ENCODE measurements at regions of chr3 and their contacts with region 1.

Region 1: GRCh38 chr3:36729204-36730056 is 34.9 kb downstream of the DCLK3 start:
- DNase-seq: no peak
- H3K4me3 Mint-ChIP-seq: no peak overlapping the region
- H3K27ac Mint-ChIP-seq: no peak overlapping the region
- H3K4me1 Mint-ChIP-seq: no peaks in the 10 kb centered on the region
- H3K27me3 Mint-ChIP-seq: peaks cover 10% of the 10 kb centered on the region

Region 2: DNA sequence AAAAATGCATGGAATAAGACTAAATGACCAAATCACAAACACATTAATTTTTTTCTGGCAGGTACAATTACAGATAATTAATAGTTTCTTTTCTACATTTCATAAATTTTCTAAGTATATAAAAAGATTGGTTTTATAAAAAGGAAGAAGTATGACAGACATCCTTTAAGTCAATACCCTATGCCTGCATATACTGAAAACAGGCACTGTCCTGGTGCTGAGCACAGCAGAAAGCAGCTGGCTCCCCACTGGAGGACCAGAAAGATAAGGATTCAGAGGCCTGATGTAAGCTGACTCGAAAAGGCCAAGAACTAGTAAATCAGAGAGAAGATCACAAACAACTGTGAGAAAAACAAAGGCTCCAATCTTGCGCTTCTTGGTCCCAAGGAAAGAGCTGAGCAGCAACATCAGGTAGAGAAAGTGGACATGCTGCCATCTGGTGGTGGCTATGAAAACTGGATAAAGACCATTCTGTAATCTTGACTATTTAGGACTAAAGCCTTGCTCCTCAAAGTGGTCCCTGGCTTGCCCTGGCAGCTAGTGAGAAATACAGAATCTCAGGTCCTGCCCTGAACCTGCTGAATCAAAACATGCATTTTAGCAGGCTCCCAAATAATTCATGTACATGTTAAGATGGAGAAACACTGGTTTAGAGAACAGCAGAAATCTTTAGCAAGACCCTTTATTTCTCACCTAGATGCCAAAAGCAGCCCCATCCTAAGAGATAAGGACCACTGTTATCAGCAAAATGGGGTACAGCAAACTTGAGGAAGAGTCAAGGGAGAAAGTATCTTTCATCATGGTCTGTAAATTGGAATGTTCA is 139.4 kb after region 1 on chr3:
- intact Hi-C with region 1: loop called (anchors 1 kb)
- DNase-seq: peak; percentile 83
- H3K4me3 Mint-ChIP-seq: no peak overlapping the region
- H3K27ac Mint-ChIP-seq: no peak overlapping the region
- H3K4me1 Mint-ChIP-seq: peaks cover 10% of the 10 kb centered on the region
- H3K27me3 Mint-ChIP-seq: no peaks in the 10 kb centered on the region

Region 3: DNA sequence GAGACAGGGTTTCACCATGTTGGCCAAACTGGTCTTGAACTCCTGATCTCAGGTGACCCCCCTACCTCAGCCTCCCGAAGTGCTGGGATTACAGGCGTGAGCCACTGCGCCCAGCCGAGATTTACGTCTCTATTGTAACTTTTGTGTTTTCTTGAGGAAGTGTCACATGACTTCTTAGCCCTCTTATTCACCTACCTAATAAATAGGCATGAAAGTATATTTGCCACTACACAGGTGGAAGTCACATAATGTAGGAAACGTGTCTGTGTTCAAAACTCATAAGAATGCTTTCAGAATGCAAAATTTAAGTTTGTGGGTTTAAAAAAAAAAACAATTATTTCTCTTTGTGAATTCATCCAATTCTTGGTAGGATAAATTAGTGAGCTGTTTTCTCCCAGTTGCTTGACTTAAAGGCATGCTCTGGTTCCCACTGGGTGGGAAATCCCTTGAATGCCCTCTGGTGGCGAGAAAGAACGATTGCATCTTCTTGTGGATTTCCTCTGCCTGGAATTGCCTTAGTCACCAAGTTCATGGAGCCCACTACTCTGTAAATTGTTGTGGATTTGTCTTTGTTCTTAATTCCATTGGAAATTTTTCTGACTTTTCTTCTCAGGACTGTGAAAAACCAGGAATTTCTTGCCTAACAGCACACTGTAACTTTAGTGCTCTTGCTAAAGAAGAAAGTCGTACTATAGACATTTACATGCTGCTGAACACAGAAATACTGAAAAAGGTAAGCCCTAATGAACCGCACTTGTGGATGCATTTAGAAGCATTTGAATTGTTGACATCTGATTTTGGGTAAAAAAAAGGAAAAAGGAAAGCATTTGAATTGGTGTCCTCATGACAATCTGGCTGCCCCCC is 1050.1 kb after region 1 on chr3:
- intact Hi-C with region 1: loop called (anchors 2 kb)
- DNase-seq: peak; percentile 72
- H3K4me3 Mint-ChIP-seq: no peak overlapping the region
- H3K27ac Mint-ChIP-seq: no peak overlapping the region
- H3K4me1 Mint-ChIP-seq: peaks cover 3% of the 10 kb centered on the region
- H3K27me3 Mint-ChIP-seq: peaks cover 10% of the 10 kb centered on the region